ENCODE measurements at regions of chr2 and their contacts with region 1.

Region 1: GRCh38 chr2:16745466-16745865 is 79.8 kb upstream of the CYRIA start:
- DNase-seq: no peak
- H3K4me3 Mint-ChIP-seq: no peak overlapping the region
- H3K27ac Mint-ChIP-seq: no peak overlapping the region
- H3K4me1 Mint-ChIP-seq: peaks cover 31% of the 10 kb centered on the region
- H3K27me3 Mint-ChIP-seq: peaks cover 1% of the 10 kb centered on the region

Region 2: GRCh38 chr2:16665748-16666448 is 79.6 kb before region 1 on chr2 and contains the start of gene CYRIA:
- intact Hi-C with region 1: loop called (anchors 5 kb)
- DNase-seq: peak; percentile 46
- H3K4me3 Mint-ChIP-seq: peak within 1 kb of the TSS; percentile 87
- H3K27ac Mint-ChIP-seq: peak within 1 kb of the TSS; percentile 86
- H3K4me1 Mint-ChIP-seq: peaks cover 24% of the 10 kb centered on the region
- H3K27me3 Mint-ChIP-seq: peaks cover 43% of the 10 kb centered on the region
- total RNA-seq, gene CYRIA: 1.8 TPM in 2 replicates

Region 3: DNA sequence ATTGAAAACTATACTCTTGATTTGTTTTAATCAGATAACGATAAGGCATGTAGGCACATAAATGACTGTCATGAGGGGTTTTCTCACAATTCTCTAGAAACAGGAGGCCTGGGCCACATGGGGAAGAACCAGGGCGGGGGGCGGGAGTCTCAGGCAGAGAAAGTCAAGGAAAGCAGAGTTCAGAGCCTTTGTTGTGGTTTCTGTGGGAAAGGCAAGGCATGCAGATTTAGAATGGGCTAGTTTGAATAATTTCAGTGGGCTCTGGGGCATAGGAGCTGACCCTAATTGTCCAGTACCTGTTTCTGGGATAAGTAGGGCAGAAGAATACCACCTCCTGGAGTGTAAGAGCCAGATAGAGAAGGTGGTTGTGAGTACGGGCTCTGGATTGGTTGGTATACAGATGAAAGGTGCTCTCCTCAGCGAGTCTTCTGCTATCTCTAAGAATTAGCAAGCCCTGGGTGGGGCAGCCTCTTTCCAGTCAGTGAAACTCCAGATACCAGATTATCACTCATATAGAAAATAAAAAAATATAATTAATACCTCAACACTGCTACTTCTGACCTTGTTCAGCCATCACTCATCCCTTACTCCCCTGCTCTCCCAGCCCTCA is 38.3 kb before region 1 on chr2:
- intact Hi-C with region 1: loop called (anchors 2 kb)
- DNase-seq: no peak
- H3K4me3 Mint-ChIP-seq: no peak overlapping the region
- H3K27ac Mint-ChIP-seq: no peak overlapping the region
- H3K4me1 Mint-ChIP-seq: peaks cover 7% of the 10 kb centered on the region
- H3K27me3 Mint-ChIP-seq: peaks cover 1% of the 10 kb centered on the region